ENCODE measurements at regions of chr18 and their contacts with region 1.

Region 1: GRCh38 chr18:4017480-4017879 is 437.6 kb downstream of the DLGAP1 start:
- DNase-seq: peak in 1 of 2 experiments; percentile 32
- H3K4me3 ChIP-seq: no peak overlapping the region
- H3K4me3 Mint-ChIP-seq: no peak overlapping the region
- H3K27ac Mint-ChIP-seq: no peak overlapping the region
- H3K4me1 ChIP-seq: no peaks in the 10 kb centered on the region
- H3K4me1 Mint-ChIP-seq: no peaks in the 10 kb centered on the region
- H3K27me3 ChIP-seq: no peaks in the 10 kb centered on the region
- H3K27me3 Mint-ChIP-seq: no peaks in the 10 kb centered on the region
- CTCF ChIP-seq: peak in 1 of 2 experiments; percentile 25

Region 2: GRCh38 chr18:3973191-3973850 is 44.2 kb before region 1 on chr18:
- CTCF ChIA-PET with region 1: interaction called, 11 read pairs
- POLR2A ChIA-PET with region 1: no interaction called
- intact Hi-C with region 1: no loop called
- DNase-seq: no peak
- H3K4me3 ChIP-seq: no peak overlapping the region
- H3K4me3 Mint-ChIP-seq: no peak overlapping the region
- H3K27ac Mint-ChIP-seq: no peak overlapping the region
- H3K4me1 ChIP-seq: no peaks in the 10 kb centered on the region
- H3K4me1 Mint-ChIP-seq: no peaks in the 10 kb centered on the region
- H3K27me3 ChIP-seq: no peaks in the 10 kb centered on the region
- H3K27me3 Mint-ChIP-seq: no peaks in the 10 kb centered on the region
- CTCF ChIP-seq: no peak

Region 3: DNA sequence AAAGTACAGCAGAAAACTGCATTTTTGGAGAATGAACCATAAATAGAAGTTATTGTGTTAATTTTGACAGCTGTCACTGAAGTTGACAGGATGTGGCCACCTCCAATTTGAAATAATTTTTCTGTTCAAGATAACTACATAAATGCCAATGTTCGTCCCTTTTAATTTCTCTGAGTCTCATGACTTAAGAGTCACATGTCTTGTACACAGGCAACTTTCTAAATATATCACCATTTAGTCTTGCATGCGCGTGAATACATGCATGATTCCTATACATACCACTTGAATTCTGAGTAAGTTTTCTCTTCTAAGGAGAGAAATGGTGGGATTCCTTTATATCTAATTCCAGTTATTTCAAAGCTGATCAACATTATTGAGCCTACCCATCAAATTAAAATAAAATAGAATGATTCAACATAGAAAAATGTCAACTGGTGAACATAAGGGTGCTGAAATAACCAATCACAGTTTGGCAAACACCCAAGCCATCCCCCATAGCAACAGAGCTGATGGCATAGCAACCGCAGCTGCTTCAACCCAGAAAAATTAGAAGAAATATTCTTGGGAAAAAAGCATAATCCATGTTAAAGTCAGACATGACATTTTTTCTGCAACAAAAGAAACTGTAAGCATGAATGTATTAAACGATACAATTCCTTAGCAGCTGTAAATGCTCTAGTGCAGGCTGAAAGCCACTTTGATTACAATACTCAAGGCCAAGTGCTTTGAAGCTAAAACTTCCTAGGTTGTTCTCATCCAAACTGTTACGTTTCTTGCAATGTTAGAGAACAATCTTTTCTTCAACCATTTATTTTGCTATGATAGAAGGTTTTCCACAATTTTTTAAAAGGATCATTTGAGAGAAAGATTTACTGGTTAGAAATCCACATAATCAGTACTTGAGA is 155.0 kb after region 1 on chr18:
- CTCF ChIA-PET with region 1: no interaction called
- POLR2A ChIA-PET with region 1: no interaction called
- intact Hi-C with region 1: no loop called
- DNase-seq: no peak
- H3K4me3 ChIP-seq: no peak overlapping the region
- H3K4me3 Mint-ChIP-seq: no peak overlapping the region
- H3K27ac Mint-ChIP-seq: no peak overlapping the region
- H3K4me1 ChIP-seq: no peaks in the 10 kb centered on the region
- H3K4me1 Mint-ChIP-seq: no peaks in the 10 kb centered on the region
- H3K27me3 ChIP-seq: no peaks in the 10 kb centered on the region
- H3K27me3 Mint-ChIP-seq: peaks cover 9% of the 10 kb centered on the region
- CTCF ChIP-seq: no peak

Measured in Caco-2 (cell line).